Mammary epithelial cell (primary cell): ENCODE measurements at regions of chr5 and their contacts with region 1.

Region 1: GRCh38 chr5:171437286-171437821 is 17.9 kb downstream of the FGF18 start:
- DNase-seq: no peak
- H3K4me3 ChIP-seq: no peak overlapping the region
- H3K27ac ChIP-seq: no peak overlapping the region
- H3K4me1 ChIP-seq: no peaks in the 10 kb centered on the region
- H3K27me3 ChIP-seq: no peaks in the 10 kb centered on the region
- CTCF ChIP-seq: no peak

Region 2: GRCh38 chr5:170907758-170908157 is 529.6 kb before region 1 on chr5:
- CTCF ChIA-PET with region 1: interaction called, 13 read pairs
- dilution Hi-C with region 1: no loop called
- in situ Hi-C with region 1: no loop called
- intact Hi-C with region 1: no loop called
- DNase-seq: peak; percentile 59
- H3K4me3 ChIP-seq: no peak overlapping the region
- H3K27ac ChIP-seq: no peak overlapping the region
- H3K4me1 ChIP-seq: no peaks in the 10 kb centered on the region
- H3K27me3 ChIP-seq: no peaks in the 10 kb centered on the region
- CTCF ChIP-seq: no peak

Region 3: DNA sequence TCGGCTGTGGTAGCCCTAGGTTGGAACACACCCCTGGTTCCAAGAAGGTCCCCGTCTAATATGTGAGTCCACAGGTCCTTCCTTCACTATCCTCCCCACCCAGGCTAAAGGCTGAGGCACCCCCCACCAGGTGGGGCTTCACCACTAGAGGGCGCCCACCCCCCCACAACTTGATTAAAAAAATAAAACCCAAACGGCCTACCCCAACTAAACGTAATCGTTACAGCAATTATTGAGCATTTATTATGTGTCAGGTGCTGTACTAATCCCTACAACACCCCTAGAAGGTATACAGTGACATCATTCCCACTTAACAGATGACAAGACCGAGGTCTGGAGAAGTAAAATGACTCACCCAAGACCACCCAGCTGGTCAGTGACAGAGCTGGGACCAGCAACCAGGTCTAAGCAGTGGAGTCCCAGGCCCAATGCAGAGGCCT is 47.1 kb after region 1 on chr5:
- CTCF ChIA-PET with region 1: no interaction called
- dilution Hi-C with region 1: loop called (anchors 5 kb)
- in situ Hi-C with region 1: no loop called
- intact Hi-C with region 1: no loop called
- DNase-seq: no peak
- H3K4me3 ChIP-seq: no peak overlapping the region
- H3K27ac ChIP-seq: no peak overlapping the region
- H3K4me1 ChIP-seq: no peaks in the 10 kb centered on the region
- H3K27me3 ChIP-seq: no peaks in the 10 kb centered on the region
- CTCF ChIP-seq: peak; percentile 60 to 70

Region 4: GRCh38 chr5:171521219-171521633 is 83.9 kb after region 1 on chr5:
- CTCF ChIA-PET with region 1: no interaction called
- dilution Hi-C with region 1: loop called (anchors 5 kb)
- in situ Hi-C with region 1: no loop called
- intact Hi-C with region 1: no loop called
- DNase-seq: peak; percentile 76
- H3K4me3 ChIP-seq: no peak overlapping the region
- H3K27ac ChIP-seq: peak overlapping the region; percentile 39
- H3K4me1 ChIP-seq: peaks cover 26% of the 10 kb centered on the region
- H3K27me3 ChIP-seq: no peaks in the 10 kb centered on the region
- CTCF ChIP-seq: peak in 1 of 2 donors; percentile 16